ENCODE measurements at regions of chr17 and their contacts with region 1.

Region 1: GRCh38 chr17:7004398-7005253 is 7.8 kb upstream of the RNASEK start:
- H3K4me3 ChIP-seq: no peak overlapping the region
- H3K27ac ChIP-seq: no peak overlapping the region
- H3K4me1 ChIP-seq: no peaks in the 10 kb centered on the region
- CTCF ChIP-seq: peak; percentile 58

Region 2: GRCh38 chr17:6666077-6666521 is 338.5 kb before region 1 on chr17:
- CTCF ChIA-PET with region 1: interaction called, 72 read pairs
- POLR2A ChIA-PET with region 1: no interaction called
- H3K4me3 ChIP-seq: no peak overlapping the region
- H3K27ac ChIP-seq: no peak overlapping the region
- H3K4me1 ChIP-seq: no peaks in the 10 kb centered on the region
- CTCF ChIP-seq: peak; percentile 86

Region 3: GRCh38 chr17:6913608-6914443 is 90.8 kb before region 1 on chr17:
- CTCF ChIA-PET with region 1: interaction called, 58 read pairs
- POLR2A ChIA-PET with region 1: interaction called, 7 read pairs
- H3K4me3 ChIP-seq: no peak overlapping the region
- H3K27ac ChIP-seq: no peak overlapping the region
- H3K4me1 ChIP-seq: no peaks in the 10 kb centered on the region
- CTCF ChIP-seq: no peak

Region 4: GRCh38 chr17:6969323-6969726 is 35.3 kb before region 1 on chr17:
- CTCF ChIA-PET with region 1: interaction called, 10 read pairs
- POLR2A ChIA-PET with region 1: interaction called, 5 read pairs
- H3K4me3 ChIP-seq: no peak overlapping the region
- H3K27ac ChIP-seq: no peak overlapping the region
- H3K4me1 ChIP-seq: no peaks in the 10 kb centered on the region
- CTCF ChIP-seq: no peak

Region 5: DNA sequence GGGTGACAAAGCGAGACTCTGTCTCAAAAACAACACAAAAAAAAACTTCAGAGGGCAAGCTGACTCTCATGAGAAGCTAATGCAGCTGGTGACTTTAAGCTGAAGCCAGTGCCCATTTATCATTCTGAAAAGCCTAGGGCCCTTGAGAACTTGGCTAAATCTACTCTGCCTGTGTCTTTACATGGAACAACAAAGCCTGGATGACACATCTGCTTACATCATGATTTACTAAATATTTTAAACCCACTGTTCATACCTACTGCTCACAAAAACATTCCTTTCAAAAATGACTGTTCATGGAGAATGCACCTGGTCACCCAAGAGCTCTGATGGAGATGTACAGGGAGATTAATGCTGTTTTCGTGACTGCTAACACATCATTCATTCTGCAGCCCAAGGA is 14.8 kb before region 1 on chr17:
- CTCF ChIA-PET with region 1: interaction called, 22 read pairs
- POLR2A ChIA-PET with region 1: interaction called, 3 read pairs
- H3K4me3 ChIP-seq: no peak overlapping the region
- H3K27ac ChIP-seq: no peak overlapping the region
- H3K4me1 ChIP-seq: no peaks in the 10 kb centered on the region
- CTCF ChIP-seq: no peak

Region 6: GRCh38 chr17:7038025-7038862 is 33.6 kb after region 1 on chr17:
- CTCF ChIA-PET with region 1: no interaction called
- POLR2A ChIA-PET with region 1: no interaction called
- H3K4me3 ChIP-seq: no peak overlapping the region
- H3K27ac ChIP-seq: no peak overlapping the region
- H3K4me1 ChIP-seq: peaks cover 2% of the 10 kb centered on the region; the same call in 1 of the 2 replicates
- CTCF ChIP-seq: peak; percentile 69

Region 7: DNA sequence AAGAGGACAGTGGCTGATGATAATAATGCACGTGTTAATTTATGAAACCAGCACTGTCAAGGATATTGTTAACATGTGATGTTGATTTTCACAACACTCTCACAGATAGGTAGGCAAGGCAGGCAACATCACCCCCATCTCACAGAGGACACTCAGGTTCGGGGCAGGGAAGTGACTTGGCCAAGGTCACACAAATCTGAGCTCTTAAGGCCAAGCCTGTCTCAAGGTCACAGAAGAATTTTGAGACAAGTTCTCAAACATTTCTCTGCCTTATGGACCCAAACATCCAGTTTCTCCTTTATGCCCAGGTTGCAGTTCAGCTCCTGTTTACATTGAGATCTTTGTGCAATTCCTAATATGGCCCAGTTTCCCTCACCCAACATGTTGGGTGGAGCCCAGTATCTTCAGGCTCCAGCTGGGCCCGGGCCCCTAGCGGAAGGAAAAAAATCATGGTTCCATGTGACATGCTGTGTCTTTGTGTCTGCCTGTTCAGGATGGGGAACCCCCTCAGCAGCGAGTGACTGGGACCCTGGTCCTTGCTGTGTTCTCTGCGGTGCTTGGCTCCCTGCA is 278.2 kb after region 1 on chr17:
- CTCF ChIA-PET with region 1: no interaction called
- POLR2A ChIA-PET with region 1: no interaction called
- H3K4me3 ChIP-seq: no peak overlapping the region
- H3K27ac ChIP-seq: no peak overlapping the region
- H3K4me1 ChIP-seq: peaks cover 9% of the 10 kb centered on the region
- CTCF ChIP-seq: no peak

Measured in HEK293 (cell line).